Esophagus muscularis mucosa (tissue), 4 donors: ENCODE measurements at regions of chr7 and their contacts with region 1.

Region 1: DNA sequence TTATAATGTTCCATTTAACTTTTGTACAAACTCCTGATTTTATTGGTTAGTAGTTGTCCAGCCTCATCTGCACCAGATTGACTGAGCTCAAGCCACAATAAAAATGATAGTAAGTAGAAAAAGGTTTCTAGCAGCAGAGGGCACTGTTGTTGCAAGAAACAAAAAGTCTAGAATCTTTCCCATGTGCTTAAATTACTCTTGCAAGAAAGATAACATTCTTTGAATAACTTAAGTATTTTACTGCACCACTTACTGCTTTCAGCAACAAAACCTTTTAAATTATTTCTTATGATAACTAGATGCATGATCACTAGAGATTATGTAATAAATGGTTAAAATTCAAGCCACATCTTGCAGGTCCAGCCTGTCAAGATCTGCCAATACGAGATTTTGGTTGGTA is 27.0 kb downstream of the LMOD2 start:
- DNase-seq: no peak
- H3K4me3 ChIP-seq: no peak overlapping the region
- H3K27ac ChIP-seq: no peak overlapping the region
- H3K4me1 ChIP-seq: peaks cover 0 to 11% (median 4%) of the 10 kb centered on the region in 4 donors
- H3K27me3 ChIP-seq: no peaks in the 10 kb centered on the region
- CTCF ChIP-seq: peak; percentile 34 to 54 (median 37)
- EP300 ChIP-seq: no peak
- POLR2A ChIP-seq: no peak

Region 2: DNA sequence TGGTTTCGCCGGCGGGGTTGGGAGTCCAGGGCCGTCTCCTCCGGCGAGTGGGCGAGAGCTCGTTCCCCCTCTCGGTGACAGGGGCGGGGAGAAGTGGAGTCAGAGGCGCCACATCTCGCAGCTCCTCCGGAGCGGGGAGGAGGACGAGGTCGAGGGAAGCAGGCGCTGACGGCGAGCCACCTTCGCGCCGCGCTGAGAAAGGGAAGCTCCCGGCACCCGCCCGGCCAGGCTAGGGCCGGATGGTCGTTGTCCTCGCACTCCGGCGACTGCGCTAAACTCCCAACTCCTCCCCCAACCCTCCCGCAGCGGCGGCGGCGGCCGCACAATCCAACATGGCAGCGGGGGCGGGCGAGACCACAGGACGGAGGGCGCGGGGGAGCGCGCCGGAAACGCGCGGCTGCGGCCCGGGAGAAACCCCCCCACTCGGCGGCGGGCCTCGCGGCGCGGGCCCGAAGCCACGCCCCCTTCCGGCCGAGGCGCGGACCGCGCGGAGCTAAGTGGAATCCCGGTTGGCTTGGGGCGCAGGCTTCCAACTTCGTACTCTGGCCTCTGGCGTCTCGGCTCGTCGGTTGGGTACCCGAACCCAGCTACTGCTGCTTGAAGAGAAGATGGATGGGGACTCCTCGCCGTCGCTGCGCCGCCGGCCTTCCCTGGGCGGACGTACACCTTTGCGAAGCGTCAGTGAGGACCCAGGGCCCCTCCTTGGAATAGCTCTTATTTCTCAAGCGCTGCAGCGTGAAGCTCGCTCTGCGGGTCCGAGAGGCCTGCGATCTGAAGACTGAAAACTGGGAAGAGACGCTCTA is 66.2 kb after region 1 on chr7 and contains the start of gene WASL:
- intact Hi-C with region 1: loop called (anchors 5 kb)
- DNase-seq: peak; percentile 98
- H3K4me3 ChIP-seq: peak within 1 kb of the TSS; percentile 89 to 96 (median 92)
- H3K27ac ChIP-seq: peak within 1 kb of the TSS; percentile 97 to 99 (median 98)
- H3K4me1 ChIP-seq: peaks cover 39 to 68% (median 63%) of the 10 kb centered on the region in 4 donors
- H3K27me3 ChIP-seq: no peaks in the 10 kb centered on the region
- CTCF ChIP-seq: peak; percentile 20 to 22 (median 21)
- EP300 ChIP-seq: no peak
- POLR2A ChIP-seq: peak; percentile 87
- total RNA-seq, gene WASL: 36.0 to 51.5 (median 38.5) TPM